ENCODE measurements at regions of chr3 and their contacts with region 1.

Region 1: GRCh38 chr3:131026321-131027178 is at the starts of genes ASTE1 and NEK11:
- DNase-seq: peak; percentile 72 to 86 (median 76)
- ATAC-seq: peak; percentile 98
- H3K4me3 ChIP-seq: peak within 1 kb of the TSS; percentile 55
- H3K27ac ChIP-seq: peak within 1 kb of the TSS; percentile 76
- H3K4me1 ChIP-seq: peaks cover 4 to 6% of the 10 kb centered on the region in 2 experiments; a peak in 3 of 5 replicates
- H3K27me3 ChIP-seq: no peaks in the 10 kb centered on the region
- CTCF ChIP-seq: no peak
- EP300 ChIP-seq: no peak
- POLR2A ChIP-seq: peak; percentile 84
- RAD21 ChIP-seq: no peak
- polyA plus RNA-seq, gene ASTE1: 10.1 to 12.1 TPM
- polyA plus RNA-seq, gene NEK11: 0.28 to 0.63 TPM

Region 2: DNA sequence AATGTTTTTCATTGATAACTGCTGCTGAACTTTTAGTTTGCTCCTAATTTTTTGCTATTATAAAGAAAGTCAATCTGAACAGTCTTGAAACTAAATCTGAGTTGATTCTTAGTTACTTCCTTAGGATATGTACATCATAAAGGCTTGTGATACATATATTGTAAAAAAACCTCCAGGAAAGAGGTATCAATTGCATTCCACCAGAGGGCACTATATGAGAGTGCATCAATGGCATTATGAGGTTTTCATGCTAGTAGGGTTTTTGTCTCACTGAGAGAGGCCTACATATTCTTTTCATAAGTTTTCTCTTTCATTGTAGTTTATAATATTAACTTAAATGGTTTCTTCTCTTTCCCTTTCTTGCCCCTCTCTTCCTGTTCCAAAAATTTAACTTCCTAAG is 326.8 kb before region 1 on chr3:
- CTCF ChIA-PET with region 1: no interaction called
- POLR2A ChIA-PET with region 1: no interaction called
- in situ Hi-C with region 1: no loop called
- intact Hi-C with region 1: loop called (anchors 10 kb)
- DNase-seq: peak; percentile 12 to 27 (median 20)
- ATAC-seq: peak; percentile 73
- H3K4me3 ChIP-seq: no peak overlapping the region
- H3K27ac ChIP-seq: no peak overlapping the region
- H3K4me1 ChIP-seq: no peaks in the 10 kb centered on the region
- H3K27me3 ChIP-seq: no peaks in the 10 kb centered on the region
- CTCF ChIP-seq: peak; percentile 25 to 63 (median 35); a peak in 4 of 6 replicates
- EP300 ChIP-seq: no peak
- POLR2A ChIP-seq: no peak
- RAD21 ChIP-seq: peak in 1 of 2 experiments; percentile 72; a peak in 2 of 4 replicates

Region 3: GRCh38 chr3:130746246-130747039 is 280.1 kb before region 1 on chr3 and contains the start of gene PIK3R4:
- CTCF ChIA-PET with region 1: no interaction called
- POLR2A ChIA-PET with region 1: no interaction called
- in situ Hi-C with region 1: no loop called
- intact Hi-C with region 1: loop called (anchors 10 kb)
- DNase-seq: peak; percentile 79 to 97 (median 85)
- ATAC-seq: peak; percentile 83
- H3K4me3 ChIP-seq: peak within 1 kb of the TSS; percentile 85
- H3K27ac ChIP-seq: peak within 1 kb of the TSS; percentile 81
- H3K4me1 ChIP-seq: peaks cover 0 to 11% of the 10 kb centered on the region in 2 experiments; a peak in 3 of 5 replicates
- H3K27me3 ChIP-seq: no peaks in the 10 kb centered on the region
- CTCF ChIP-seq: no peak
- EP300 ChIP-seq: no peak
- POLR2A ChIP-seq: peak; percentile 78
- RAD21 ChIP-seq: no peak
- polyA plus RNA-seq, gene PIK3R4: 20.6 to 26.0 TPM

Region 4: GRCh38 chr3:130892759-130893375 is 133.7 kb before region 1 on chr3:
- CTCF ChIA-PET with region 1: no interaction called
- POLR2A ChIA-PET with region 1: no interaction called
- in situ Hi-C with region 1: no loop called
- intact Hi-C with region 1: loop called (anchors 10 kb)
- DNase-seq: peak; percentile 39 to 81 (median 52)
- ATAC-seq: peak; percentile 66
- H3K4me3 ChIP-seq: peak overlapping the region; percentile 86
- H3K27ac ChIP-seq: peak overlapping the region; percentile 97
- H3K4me1 ChIP-seq: peaks cover 8% of the 10 kb centered on the region in 2 experiments; a peak in 3 of 5 replicates
- H3K27me3 ChIP-seq: no peaks in the 10 kb centered on the region
- CTCF ChIP-seq: peak; percentile 59 to 78 (median 72); a peak in 5 of 6 replicates
- EP300 ChIP-seq: no peak
- POLR2A ChIP-seq: no peak
- RAD21 ChIP-seq: peak; percentile 83 to 86

Region 5: GRCh38 chr3:131110087-131110486 is 83.5 kb after region 1 on chr3:
- CTCF ChIA-PET with region 1: no interaction called
- POLR2A ChIA-PET with region 1: no interaction called
- in situ Hi-C with region 1: no loop called
- intact Hi-C with region 1: no loop called
- DNase-seq: no peak
- ATAC-seq: no peak
- H3K4me3 ChIP-seq: no peak overlapping the region
- H3K27ac ChIP-seq: no peak overlapping the region
- H3K4me1 ChIP-seq: no peaks in the 10 kb centered on the region
- H3K27me3 ChIP-seq: no peaks in the 10 kb centered on the region
- CTCF ChIP-seq: no peak
- EP300 ChIP-seq: no peak
- POLR2A ChIP-seq: no peak
- RAD21 ChIP-seq: no peak

Region 6: DNA sequence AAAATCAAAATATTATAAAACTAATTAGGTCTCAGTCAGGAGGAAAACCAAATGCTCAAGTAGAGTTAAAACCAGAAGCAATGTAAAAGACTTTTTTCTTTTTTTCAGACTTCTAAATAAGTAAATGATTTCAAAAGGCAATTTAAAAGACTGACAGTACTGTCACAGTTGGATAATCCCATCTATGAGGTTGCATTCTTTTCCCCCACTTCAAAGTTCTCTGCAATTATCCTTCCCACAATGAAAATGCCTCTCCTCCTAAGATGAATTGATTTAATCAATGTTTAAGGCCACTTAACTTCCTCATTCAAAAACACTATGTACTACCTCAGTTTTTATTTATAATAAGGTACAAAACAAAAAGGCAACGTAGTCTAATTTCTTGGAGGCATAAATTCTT is 468.2 kb after region 1 on chr3:
- CTCF ChIA-PET with region 1: no interaction called
- POLR2A ChIA-PET with region 1: no interaction called
- in situ Hi-C with region 1: loop called (anchors 25 kb)
- intact Hi-C with region 1: no loop called
- DNase-seq: no peak
- ATAC-seq: no peak
- H3K4me3 ChIP-seq: no peak overlapping the region
- H3K27ac ChIP-seq: no peak overlapping the region
- H3K4me1 ChIP-seq: no peaks in the 10 kb centered on the region
- H3K27me3 ChIP-seq: no peaks in the 10 kb centered on the region
- CTCF ChIP-seq: no peak
- EP300 ChIP-seq: no peak
- POLR2A ChIP-seq: no peak
- RAD21 ChIP-seq: no peak

Region 7: DNA sequence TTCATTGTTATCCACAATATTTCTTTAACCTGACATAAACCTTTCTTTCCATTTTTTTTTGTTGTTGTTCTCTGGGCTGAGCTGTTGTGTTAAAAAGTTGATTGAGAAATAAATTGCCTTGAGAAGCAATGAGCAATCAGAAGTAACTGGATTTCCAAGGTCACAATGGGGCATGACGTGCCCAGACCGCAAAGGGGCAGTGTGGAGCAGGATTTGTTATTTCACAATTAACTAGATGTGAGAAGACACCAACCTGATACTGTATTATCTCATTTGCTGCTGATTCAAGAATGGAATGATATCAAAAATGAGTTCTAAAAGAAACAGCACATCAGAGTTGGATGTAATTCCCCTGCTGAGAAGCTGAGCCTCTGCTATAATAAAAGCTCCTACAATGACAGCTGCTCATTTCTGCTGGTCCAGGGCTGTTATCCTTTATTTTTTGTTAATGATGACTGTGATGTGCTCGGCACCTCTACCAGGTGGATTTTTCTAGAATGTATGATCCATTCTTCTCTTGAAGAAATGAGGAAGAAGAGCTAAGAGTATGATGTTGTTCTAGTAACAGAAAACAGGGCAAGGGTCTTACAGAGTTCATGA is 980.2 kb after region 1 on chr3:
- CTCF ChIA-PET with region 1: no interaction called
- POLR2A ChIA-PET with region 1: no interaction called
- in situ Hi-C with region 1: loop called (anchors 25 kb)
- intact Hi-C with region 1: no loop called
- DNase-seq: peak; percentile 14 to 23 (median 16)
- ATAC-seq: 0 out of 3 replicates have a peak, but pooled peaks have one; percentile 56
- H3K4me3 ChIP-seq: no peak overlapping the region
- H3K27ac ChIP-seq: no peak overlapping the region
- H3K4me1 ChIP-seq: no peaks in the 10 kb centered on the region
- H3K27me3 ChIP-seq: no peaks in the 10 kb centered on the region
- CTCF ChIP-seq: peak; percentile 37 to 59 (median 50)
- EP300 ChIP-seq: no peak
- POLR2A ChIP-seq: no peak
- RAD21 ChIP-seq: peak in 1 of 2 experiments; percentile 30; a peak in 1 of 4 replicates

Measured in K562 (cell line).